Posterior cingulate gyrus (tissue), 11 donors: ENCODE measurements at regions of chr5 and their contacts with region 1.

Region 1: GRCh38 chr5:149442563-149443182 is 63.6 kb upstream of the IL17B start:
- DNase-seq: peak; percentile 63 to 97 (median 87)

Region 2: DNA sequence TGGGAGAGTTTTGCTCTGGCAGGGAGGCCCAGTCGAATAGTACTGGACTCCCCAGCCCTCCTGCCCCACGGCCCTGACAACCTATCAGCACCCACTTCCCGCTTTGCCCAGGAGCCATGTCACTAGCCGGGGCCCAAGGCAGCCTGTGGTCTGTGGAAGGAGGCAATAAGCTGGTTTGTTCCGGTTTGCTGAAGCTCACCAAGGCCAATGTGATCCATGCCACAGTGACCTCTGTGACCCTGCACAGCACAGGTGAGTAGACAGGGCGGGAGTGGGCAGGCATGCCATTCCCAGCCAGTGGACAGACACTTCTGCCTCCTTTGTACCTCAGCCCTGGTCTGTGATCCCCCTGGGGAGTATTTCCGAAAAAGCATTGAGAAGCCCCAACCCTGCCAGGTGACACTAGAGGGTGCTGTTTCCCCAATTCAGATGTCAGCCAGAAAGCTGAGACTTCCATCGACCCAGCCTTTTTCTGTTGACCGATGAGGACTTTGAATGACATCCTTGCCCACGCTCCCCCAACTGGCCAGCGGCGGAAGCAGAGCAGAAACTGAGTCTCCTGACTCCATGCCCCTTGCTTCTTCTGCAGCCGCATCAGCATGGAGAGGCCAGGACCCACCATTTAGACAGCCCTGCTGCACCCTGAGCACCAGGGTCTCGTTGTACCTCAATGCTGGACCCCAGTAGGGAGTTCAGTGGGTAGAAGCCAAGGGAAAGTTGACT is 75.3 kb before region 1 on chr5:
- intact Hi-C with region 1: no loop called
- DNase-seq: peak in 4 of 10 donors; percentile 39 to 60 (median 52)

Region 3: GRCh38 chr5:149551200-149552037 is 108.7 kb after region 1 on chr5 and contains the start of gene CSNK1A1:
- intact Hi-C with region 1: loop called (anchors 1 kb)
- DNase-seq: peak; percentile 94 to 99 (median 96)

Region 4: GRCh38 chr5:149561848-149562247 is 119.2 kb after region 1 on chr5:
- intact Hi-C with region 1: loop called (anchors 2 kb)
- DNase-seq: no peak

Region 5: DNA sequence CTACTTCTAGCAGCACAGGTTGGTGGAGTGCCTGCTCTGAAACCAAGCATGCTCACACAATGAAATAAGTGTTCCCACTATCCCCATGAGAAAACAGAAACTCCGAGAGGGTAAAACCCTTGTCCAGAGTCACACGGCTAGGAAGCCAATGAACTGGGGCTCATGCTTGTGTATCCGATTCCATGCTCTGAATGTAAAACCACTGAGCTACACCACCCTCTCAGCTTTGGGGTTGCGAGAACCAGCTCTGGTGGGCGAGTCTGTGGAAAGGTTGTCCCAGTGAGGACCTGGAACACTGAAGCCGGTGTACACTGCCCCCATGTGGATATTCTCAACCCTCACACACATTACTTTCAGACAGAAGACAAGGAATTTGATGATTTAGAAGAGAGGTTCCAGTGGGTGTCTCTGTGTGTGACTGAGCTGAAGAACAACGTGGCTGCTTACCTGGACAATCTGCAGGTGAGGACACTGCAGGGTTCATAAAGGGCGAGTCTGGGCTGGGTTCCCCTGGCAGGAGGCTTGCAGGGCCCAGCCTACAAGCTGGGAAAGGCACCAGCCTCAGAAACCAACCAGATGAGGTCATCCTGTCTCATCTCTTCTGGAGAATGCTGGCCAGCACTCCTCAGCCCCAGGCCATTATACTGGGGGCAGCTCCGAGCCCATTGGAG is 176.0 kb after region 1 on chr5:
- intact Hi-C with region 1: loop called (anchors 2 kb)
- DNase-seq: peak in 6 of 10 donors; percentile 31 to 91 (median 49)